CD8-positive, alpha-beta memory T cell (primary cell): ENCODE measurements at regions of chr5 and their contacts with region 1.

Region 1: GRCh38 chr5:138565100-138565821 is 9.9 kb downstream of the HSPA9 start:
- DNase-seq: peak; percentile 9 to 88 (median 63)
- H3K4me3 ChIP-seq: peak overlapping the region; percentile 17
- H3K4me3 Mint-ChIP-seq: peak overlapping the region; percentile 19 to 90 (median 80)
- H3K27ac ChIP-seq: peak overlapping the region; percentile 68
- H3K27ac Mint-ChIP-seq: peak overlapping the region; percentile 83 to 100 (median 96)
- H3K4me1 ChIP-seq: peaks cover 32% of the 10 kb centered on the region
- H3K4me1 Mint-ChIP-seq: peaks cover 66 to 84% (median 79%) of the 10 kb centered on the region in 3 donors
- H3K27me3 ChIP-seq: no peaks in the 10 kb centered on the region
- H3K27me3 Mint-ChIP-seq: no peaks in the 10 kb centered on the region

Region 2: DNA sequence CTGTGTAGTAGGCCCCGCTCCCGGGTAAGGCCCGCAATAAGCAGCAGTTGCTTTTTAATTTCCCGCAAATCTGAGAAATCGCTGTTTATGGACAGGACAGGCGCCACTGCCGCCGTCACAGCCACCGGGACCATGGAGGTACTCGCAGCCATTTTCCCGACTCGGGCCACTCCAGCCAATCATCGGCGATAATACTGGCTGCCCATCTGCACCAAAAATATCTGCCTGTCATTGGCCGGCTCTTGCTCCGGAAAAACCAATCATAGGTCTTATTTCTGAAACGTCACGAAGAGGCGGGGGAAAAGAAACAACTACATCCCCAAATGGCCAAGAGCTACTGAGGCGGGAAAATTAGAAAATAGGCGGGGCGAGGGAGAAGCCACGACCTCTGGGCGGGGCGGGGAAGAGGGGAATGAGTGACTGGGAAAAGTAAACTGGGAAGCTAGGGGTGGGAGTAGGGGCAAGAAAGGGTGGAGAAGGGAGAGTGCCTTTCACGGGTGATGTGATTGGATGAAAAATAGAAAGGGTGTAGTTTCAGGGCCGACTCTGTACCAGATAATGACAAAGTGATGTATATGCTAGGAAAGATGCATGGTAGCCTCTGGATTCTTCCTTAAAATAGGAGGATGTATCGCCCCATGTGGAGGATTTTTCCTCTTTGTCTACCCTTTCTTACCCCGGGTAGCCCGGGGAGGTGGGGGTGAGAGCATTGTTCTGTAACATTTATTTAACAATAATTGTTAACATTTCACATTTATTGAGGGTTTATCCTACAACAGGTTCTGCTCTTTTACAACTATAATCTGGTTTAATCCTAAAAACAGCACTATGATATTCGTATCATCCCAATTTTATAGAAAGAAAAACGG is 351.9 kb before region 1 on chr5 and contains the start of gene CDC23:
- CTCF ChIA-PET with region 1: no interaction called
- POLR2A ChIA-PET with region 1: no interaction called
- DNase-seq: peak; percentile 82 to 94 (median 92)
- H3K4me3 ChIP-seq: peak within 1 kb of the TSS; percentile 95
- H3K4me3 Mint-ChIP-seq: peak within 1 kb of the TSS; percentile 95 to 99 (median 98)
- H3K27ac ChIP-seq: peak within 1 kb of the TSS; percentile 92
- H3K27ac Mint-ChIP-seq: peak within 1 kb of the TSS; percentile 76 to 98 (median 97)
- H3K4me1 ChIP-seq: peaks cover 21% of the 10 kb centered on the region
- H3K4me1 Mint-ChIP-seq: peaks cover 23 to 29% (median 29%) of the 10 kb centered on the region in 3 donors
- H3K27me3 ChIP-seq: no peaks in the 10 kb centered on the region
- H3K27me3 Mint-ChIP-seq: peaks cover 0 to 3% of the 10 kb centered on the region in 2 donors
- total RNA-seq, gene CDC23: 48.7 to 49.7 TPM

Region 3: DNA sequence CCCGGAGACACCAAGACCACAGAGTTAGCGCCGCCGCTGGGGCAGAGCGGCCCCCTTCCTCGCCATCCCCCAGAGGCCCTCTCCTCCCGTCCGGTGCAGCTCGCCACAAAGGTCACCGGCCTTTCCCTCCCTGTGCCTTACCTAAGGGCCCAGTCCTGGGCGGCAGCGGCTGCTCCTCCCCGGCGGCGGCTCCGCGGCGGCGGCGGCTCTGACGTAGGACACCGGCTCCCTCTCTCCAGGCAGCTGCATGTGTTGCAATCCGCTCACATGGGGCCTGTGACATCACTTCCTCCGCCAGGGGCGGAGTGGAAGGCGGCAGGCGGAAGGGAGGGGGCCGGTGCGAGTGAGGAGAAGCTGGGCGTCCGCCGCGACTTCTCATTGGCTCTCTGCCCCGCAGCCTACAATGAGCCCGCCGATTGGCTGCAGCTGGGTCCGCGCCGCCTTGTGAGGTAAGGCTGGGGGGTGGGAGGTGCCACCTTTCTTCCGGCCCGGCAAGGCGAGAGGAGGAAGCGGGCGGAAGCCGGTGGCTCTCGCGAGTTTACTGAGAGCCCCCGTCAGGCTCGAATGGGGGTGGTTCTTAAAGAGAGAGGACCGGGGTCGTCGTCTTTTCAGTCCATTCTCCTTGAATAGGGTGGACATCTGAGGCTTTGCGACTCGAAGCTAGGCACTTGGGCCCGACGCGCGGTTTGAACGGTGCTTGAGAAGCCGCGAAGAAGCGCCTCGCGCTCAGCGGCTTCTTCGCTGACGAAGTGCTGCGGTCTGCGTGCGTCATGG is 22.1 kb before region 1 on chr5 and contains the start of gene ETF1:
- CTCF ChIA-PET with region 1: interaction called, 3 read pairs
- POLR2A ChIA-PET with region 1: interaction called, 17 read pairs
- DNase-seq: peak; percentile 99 to 100 (median 100)
- H3K4me3 ChIP-seq: peak within 1 kb of the TSS; percentile 89
- H3K4me3 Mint-ChIP-seq: peak within 1 kb of the TSS; percentile 96 to 100 (median 98)
- H3K27ac ChIP-seq: peak within 1 kb of the TSS; percentile 99
- H3K27ac Mint-ChIP-seq: peak within 1 kb of the TSS; percentile 99 to 100 (median 100)
- H3K4me1 ChIP-seq: peaks cover 75% of the 10 kb centered on the region
- H3K4me1 Mint-ChIP-seq: peaks cover 71 to 94% (median 75%) of the 10 kb centered on the region in 3 donors
- H3K27me3 ChIP-seq: no peaks in the 10 kb centered on the region
- H3K27me3 Mint-ChIP-seq: no peaks in the 10 kb centered on the region
- total RNA-seq, gene ETF1: 239 to 246 TPM

Region 4: GRCh38 chr5:138663009-138663408 is 97.7 kb after region 1 on chr5:
- CTCF ChIA-PET with region 1: no interaction called
- POLR2A ChIA-PET with region 1: no interaction called
- DNase-seq: peak in 2 of 5 donors; percentile 56 to 57
- H3K4me3 ChIP-seq: peak overlapping the region; percentile 3
- H3K4me3 Mint-ChIP-seq: peak overlapping the region in 1 of 7 donors; percentile 27
- H3K27ac ChIP-seq: no peak overlapping the region
- H3K27ac Mint-ChIP-seq: peak overlapping the region in 3 of 8 donors; percentile 1 to 48 (median 1)
- H3K4me1 ChIP-seq: peaks cover 18% of the 10 kb centered on the region
- H3K4me1 Mint-ChIP-seq: peaks cover 18 to 22% (median 18%) of the 10 kb centered on the region in 3 donors
- H3K27me3 ChIP-seq: peaks cover 79% of the 10 kb centered on the region
- H3K27me3 Mint-ChIP-seq: peaks cover 75 to 90% of the 10 kb centered on the region in 2 donors